RWPE1 (cell line): ENCODE measurements at regions of chr19 and their contacts with region 1.

Region 1: DNA sequence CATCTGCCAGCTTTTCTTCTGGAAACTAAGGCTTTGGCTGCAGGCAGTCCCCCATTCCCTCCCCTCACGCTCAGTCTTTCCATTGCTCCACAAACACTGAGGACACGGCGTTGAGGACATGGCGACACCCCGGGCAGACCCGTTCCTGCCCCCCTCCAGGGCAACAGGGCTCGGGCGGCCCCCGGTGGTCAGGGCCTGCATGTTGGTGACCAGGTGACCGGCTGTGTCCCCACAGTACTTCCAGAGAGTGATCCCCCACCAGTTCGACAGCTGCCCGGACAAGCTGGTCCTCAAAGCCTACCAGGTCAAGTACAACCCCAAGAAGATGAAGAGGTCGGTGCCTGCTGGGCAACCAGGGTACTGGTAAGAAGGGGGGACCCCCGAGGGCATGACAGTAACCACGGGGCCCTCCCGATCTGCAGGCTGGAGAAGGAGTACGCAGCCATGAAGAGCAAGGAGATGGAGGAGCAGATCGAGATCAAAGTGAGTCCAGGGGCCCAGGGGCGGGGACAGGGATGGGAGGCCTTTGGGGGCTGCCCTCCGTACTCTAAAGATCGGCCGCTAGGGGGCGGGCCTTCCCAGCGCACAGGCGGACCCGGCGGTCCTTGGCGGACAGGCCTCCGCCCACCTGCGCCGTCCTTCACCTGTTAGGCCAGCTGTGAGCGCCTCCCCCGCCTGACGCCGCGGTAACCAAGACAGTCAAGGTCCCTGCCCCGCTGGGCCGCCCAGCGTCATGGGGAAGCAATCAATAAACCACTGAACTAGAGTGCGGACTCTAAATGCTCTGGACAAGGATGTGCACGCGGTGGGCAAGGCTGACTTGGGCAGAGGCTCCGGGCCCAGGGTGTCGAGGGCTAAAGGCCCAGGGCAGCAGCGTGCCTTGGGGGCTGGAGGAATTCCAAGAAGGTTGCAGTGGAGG is 21.1 kb downstream of the PRR36 start:
- DNase-seq: peak; percentile 74
- H3K27ac ChIP-seq: no peak overlapping the region
- CTCF ChIP-seq: peak; percentile 84

Region 2: GRCh38 chr19:7829561-7830271 is 23.4 kb before region 1 on chr19 and contains the start of gene EVI5L:
- CTCF ChIA-PET with region 1: no interaction called
- POLR2A ChIA-PET with region 1: no interaction called
- DNase-seq: peak; percentile 99
- H3K27ac ChIP-seq: peak within 1 kb of the TSS; percentile 94
- CTCF ChIP-seq: no peak

Region 3: GRCh38 chr19:7868676-7869452 is 15.8 kb after region 1 on chr19:
- CTCF ChIA-PET with region 1: interaction called, 10 read pairs
- POLR2A ChIA-PET with region 1: no interaction called
- DNase-seq: peak; percentile 76
- H3K27ac ChIP-seq: peak overlapping the region; percentile 75
- CTCF ChIP-seq: peak; percentile 92